ENCODE measurements at regions of chr6 and their contacts with region 1.

Region 1: DNA sequence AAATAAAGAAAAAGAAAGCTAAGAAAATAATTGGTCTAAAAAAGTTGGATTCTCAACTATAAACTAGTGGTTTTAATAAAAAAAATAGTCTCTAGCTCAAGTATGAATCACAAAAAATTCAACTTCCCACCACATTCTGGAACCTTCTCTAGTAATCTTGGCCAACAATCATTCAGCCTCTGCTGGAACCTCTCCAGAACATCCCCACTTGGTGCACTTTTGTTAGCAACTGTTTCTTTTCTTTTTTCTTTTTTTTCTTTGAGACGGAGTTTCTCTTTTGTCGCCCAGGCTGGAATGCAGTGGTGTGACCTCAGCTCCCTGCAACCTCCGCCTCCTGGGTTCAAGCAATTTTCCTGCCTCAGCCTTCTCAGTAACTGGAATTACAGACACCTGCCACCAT is 35.7 kb downstream of the TXLNB start:
- DNase-seq: no peak
- ATAC-seq: no peak
- H3K4me3 ChIP-seq: no peak overlapping the region
- H3K4me3 Mint-ChIP-seq: no peak overlapping the region
- H3K27ac ChIP-seq: no peak overlapping the region
- H3K27ac Mint-ChIP-seq: no peak overlapping the region
- H3K4me1 ChIP-seq: peaks cover 46% of the 10 kb centered on the region
- H3K4me1 Mint-ChIP-seq: peaks cover 43% of the 10 kb centered on the region
- H3K27me3 ChIP-seq: no peaks in the 10 kb centered on the region
- H3K27me3 Mint-ChIP-seq: no peaks in the 10 kb centered on the region
- CTCF ChIP-seq: no peak

Region 2: DNA sequence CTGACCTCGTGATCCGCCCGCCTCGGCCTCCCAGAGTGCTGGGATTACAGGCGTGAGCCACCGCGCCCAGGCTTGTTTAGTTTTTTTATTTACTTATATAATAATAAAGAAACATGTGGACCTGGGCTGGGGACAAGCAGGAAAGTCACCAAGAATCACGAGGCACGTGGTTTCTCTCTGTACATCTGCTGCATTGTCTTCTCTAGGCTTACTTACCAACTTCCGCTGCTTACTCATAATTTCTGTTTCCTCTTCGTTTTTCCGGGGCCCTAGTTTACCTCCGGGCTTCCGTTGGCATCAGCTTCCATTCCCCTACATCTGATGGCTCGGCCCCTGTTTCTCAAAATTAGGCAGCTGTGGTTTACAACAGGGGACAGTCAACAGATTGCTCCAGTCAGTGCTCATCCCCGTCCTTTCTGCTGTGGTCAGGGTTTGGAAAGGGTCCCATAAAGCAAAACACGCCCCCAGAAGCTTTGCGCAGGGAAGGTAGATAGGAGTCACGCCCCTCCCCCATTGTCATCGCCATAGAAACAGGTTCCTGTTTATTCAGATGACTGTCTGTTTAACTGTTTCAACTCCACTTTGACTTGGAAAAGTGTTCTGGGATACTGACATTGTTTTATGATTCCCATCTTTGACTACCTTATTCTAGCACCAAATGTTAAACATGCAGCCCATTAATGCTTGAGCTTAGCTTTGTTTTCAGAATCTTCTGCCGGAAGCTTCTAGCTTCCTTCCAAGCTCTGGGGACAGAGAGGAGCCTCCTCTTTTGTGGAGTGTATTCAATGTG is 67.6 kb after region 1 on chr6:
- CTCF ChIA-PET with region 1: interaction called, 9 read pairs
- POLR2A ChIA-PET with region 1: interaction called, 11 read pairs
- intact Hi-C with region 1: no loop called
- DNase-seq: peak; percentile 61 to 92 (median 72)
- ATAC-seq: peak; percentile 86
- H3K4me3 ChIP-seq: peak overlapping the region; percentile 57
- H3K4me3 Mint-ChIP-seq: peak overlapping the region; percentile 93
- H3K27ac ChIP-seq: peak overlapping the region; percentile 91 to 97
- H3K27ac Mint-ChIP-seq: peak overlapping the region; percentile 99
- H3K4me1 ChIP-seq: peaks cover 30% of the 10 kb centered on the region
- H3K4me1 Mint-ChIP-seq: peaks cover 50% of the 10 kb centered on the region
- H3K27me3 ChIP-seq: no peaks in the 10 kb centered on the region
- H3K27me3 Mint-ChIP-seq: no peaks in the 10 kb centered on the region
- CTCF ChIP-seq: no peak

Measured in CD4-positive, alpha-beta T cell (primary cell).